HEK293 (cell line): ENCODE measurements at regions of chr1 and their contacts with region 1.

Region 1: GRCh38 chr1:246689409-246690008 is 34.7 kb upstream of the SCCPDH start:
- H3K4me3 ChIP-seq: no peak overlapping the region; the same call in 1 of the 2 replicates
- H3K27ac ChIP-seq: no peak overlapping the region
- H3K4me1 ChIP-seq: no peaks in the 10 kb centered on the region
- CTCF ChIP-seq: 0 out of 2 replicates have a peak, but pooled peaks have one; percentile 24

Region 2: DNA sequence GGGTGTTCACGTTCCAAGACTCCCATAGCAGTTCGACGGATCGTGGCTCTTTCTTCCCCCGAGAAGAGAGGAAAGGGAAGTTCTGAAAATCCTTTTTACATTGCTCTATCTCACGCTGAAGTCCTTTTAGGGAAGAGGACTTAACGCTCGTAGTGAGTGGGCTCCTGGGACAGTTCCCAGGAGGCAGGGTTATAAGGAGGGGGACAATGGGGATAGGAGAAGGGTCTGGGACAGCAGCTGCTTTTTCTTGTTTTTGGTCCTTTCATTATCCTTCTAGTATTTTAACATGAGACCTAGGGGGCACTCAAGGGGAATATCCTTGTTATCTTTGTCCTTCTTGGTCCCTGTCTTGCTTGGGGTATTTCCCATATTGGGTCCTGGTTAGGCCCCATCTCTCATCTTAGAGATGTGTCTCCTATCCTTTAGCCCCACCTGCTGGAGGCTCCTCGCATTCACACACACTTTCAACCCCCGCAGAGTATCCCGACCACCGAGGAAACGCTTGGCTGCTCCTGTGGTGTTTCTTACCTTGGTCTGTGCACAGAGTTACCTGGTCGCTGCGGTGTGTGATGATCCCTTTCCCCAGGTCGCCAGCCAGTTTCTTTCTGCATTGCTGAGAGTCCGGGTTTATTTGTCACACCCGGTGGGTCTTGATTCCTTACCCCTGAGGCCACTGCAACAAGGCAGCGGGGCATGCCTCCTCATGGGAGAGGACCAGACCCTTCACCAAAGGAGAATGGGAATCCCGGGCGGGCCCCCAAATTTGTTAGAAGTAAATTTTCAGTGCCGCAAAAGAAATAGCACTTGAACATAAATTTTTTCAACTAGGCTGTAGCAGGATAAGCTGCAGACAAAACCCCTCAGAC is 64.4 kb after region 1 on chr1:
- CTCF ChIA-PET with region 1: interaction called, 11 read pairs
- POLR2A ChIA-PET with region 1: no interaction called
- H3K4me3 ChIP-seq: no peak overlapping the region
- H3K27ac ChIP-seq: no peak overlapping the region
- H3K4me1 ChIP-seq: no peaks in the 10 kb centered on the region
- CTCF ChIP-seq: no peak